ENCODE measurements at regions of chr6 and their contacts with region 1.

Region 1: GRCh38 chr6:75183099-75183541 is 22.7 kb downstream of the COL12A1 start:
- DNase-seq: no peak
- H3K4me3 ChIP-seq: no peak overlapping the region
- H3K27ac ChIP-seq: peak overlapping the region in 1 of 4 donors; percentile 48
- H3K4me1 ChIP-seq: peaks cover 0 to 24% (median 5%) of the 10 kb centered on the region in 4 donors
- H3K27me3 ChIP-seq: no peaks in the 10 kb centered on the region
- CTCF ChIP-seq: no peak
- EP300 ChIP-seq: no peak
- POLR2A ChIP-seq: no peak

Region 2: DNA sequence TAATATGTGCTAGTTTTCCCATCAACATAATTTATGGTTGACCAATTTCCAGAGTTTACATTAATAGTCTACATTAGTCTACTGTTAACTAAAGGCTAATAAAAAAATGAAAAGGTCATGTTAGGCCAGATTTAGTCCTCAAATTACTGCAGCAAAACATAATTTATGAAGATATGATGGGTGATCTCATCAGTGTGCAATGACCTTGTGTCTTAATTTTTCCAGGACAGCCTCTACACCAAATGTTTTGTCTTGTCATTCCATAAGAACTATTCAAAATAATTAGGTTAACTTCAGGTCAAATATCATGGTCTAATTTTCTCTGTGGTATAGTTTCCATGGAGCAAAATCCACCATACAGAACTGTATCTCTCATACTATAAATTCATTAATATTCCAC is 211.5 kb before region 1 on chr6:
- intact Hi-C with region 1: no loop called
- DNase-seq: no peak
- H3K4me3 ChIP-seq: no peak overlapping the region
- H3K27ac ChIP-seq: no peak overlapping the region
- H3K4me1 ChIP-seq: peaks cover 0 to 42% (median 39%) of the 10 kb centered on the region in 4 donors
- H3K27me3 ChIP-seq: no peaks in the 10 kb centered on the region
- CTCF ChIP-seq: no peak
- EP300 ChIP-seq: no peak
- POLR2A ChIP-seq: no peak

Region 3: DNA sequence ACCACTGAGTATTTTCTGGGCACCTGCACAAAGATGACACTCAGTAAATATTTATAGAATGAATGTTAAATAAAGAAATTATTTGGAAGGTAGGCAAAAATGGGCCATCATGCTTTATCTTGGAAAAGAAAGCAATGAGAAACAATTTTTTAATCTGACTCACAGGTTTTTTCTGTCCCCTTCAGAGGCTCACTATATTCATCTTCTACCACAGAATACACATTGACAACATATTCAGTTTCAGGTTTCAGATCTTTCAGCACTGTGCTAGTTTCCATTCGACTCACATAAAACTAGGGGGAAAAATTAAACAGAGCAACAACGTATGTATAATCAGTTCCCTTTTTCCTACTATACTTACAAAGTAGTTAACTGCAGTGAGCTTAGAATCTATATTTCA is 35.6 kb before region 1 on chr6:
- intact Hi-C with region 1: loop called (anchors 5 kb)
- DNase-seq: no peak
- H3K4me3 ChIP-seq: no peak overlapping the region
- H3K27ac ChIP-seq: peak overlapping the region in 2 of 4 donors; percentile 25 to 34
- H3K4me1 ChIP-seq: peaks cover 0 to 38% (median 28%) of the 10 kb centered on the region in 4 donors
- H3K27me3 ChIP-seq: no peaks in the 10 kb centered on the region
- CTCF ChIP-seq: no peak
- EP300 ChIP-seq: no peak
- POLR2A ChIP-seq: no peak

Region 4: GRCh38 chr6:75386053-75386770 is 203.1 kb after region 1 on chr6:
- intact Hi-C with region 1: no loop called
- DNase-seq: no peak
- H3K4me3 ChIP-seq: no peak overlapping the region
- H3K27ac ChIP-seq: no peak overlapping the region
- H3K4me1 ChIP-seq: peaks cover 10 to 25% (median 13%) of the 10 kb centered on the region in 4 donors
- H3K27me3 ChIP-seq: no peaks in the 10 kb centered on the region
- CTCF ChIP-seq: no peak
- EP300 ChIP-seq: no peak
- POLR2A ChIP-seq: no peak